ENCODE measurements at regions of chr15 and their contacts with region 1.

Region 1: GRCh38 chr15:67085818-67086636 is 20.6 kb downstream of the SMAD3 start:
- DNase-seq: peak; percentile 97
- ATAC-seq: peak; percentile 66
- H3K4me3 ChIP-seq: peak overlapping the region; percentile 54
- H3K27ac ChIP-seq: peak overlapping the region; percentile 86
- H3K4me1 ChIP-seq: peaks cover 84% of the 10 kb centered on the region
- H3K27me3 ChIP-seq: no peaks in the 10 kb centered on the region
- CTCF ChIP-seq: no peak
- EP300 ChIP-seq: peak; percentile 95 to 96
- POLR2A ChIP-seq: no peak
- RAD21 ChIP-seq: peak; percentile 26; the same call in 1 of the 2 replicates

Region 2: DNA sequence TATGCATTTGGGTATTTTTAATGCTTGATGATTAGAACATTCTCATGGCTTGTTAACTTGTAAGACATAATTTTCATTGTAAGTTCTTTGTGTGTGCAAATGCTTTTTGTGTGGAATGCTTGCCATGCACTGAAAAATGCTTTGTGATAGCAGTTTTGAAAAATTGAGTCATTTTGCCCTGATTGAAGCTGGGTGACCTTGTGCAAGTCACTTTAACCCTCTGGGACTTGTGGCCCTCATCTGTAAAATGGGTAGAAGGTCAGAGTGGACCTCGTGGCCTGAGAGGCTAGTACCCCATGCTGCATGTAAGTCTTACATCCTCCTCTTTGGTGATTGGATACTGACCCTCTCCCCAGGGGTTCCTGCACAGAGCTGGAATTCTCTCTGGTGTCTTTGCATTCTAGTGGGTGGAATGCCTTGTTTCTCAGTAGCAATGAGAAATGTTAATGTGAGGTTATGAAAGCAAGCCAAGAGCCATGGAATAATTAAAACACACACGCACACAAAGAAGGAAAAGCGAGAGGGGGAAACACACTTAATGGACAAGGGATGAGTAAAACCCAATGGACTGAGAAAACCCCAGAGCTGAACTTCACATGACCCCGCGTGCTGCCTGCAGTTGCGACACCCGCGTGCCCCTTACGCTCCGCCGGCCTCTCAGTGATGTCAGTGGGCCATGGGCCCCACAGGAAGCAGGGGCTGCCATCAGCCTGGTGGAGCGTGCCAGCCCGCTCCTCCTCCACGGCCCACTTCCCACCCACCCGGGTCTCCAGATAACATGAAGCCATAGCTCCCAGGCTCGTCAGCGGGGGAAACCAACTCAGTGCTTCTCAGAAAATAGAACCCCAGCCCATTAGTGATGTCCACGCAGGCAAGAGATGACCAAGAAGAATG is 23.4 kb after region 1 on chr15:
- CTCF ChIA-PET with region 1: interaction called, 6 read pairs
- POLR2A ChIA-PET with region 1: interaction called, 79 read pairs
- RAD21 ChIA-PET with region 1: interaction called, 15 read pairs
- SMC1A ChIA-PET with region 1: interaction called, 247 read pairs
- in situ Hi-C with region 1: no loop called
- intact Hi-C with region 1: no loop called
- DNase-seq: no peak
- ATAC-seq: peak; percentile 88
- H3K4me3 ChIP-seq: peak overlapping the region; percentile 23; the same call in 1 of the 2 replicates
- H3K27ac ChIP-seq: peak overlapping the region; percentile 92
- H3K4me1 ChIP-seq: peaks cover 63% of the 10 kb centered on the region
- H3K27me3 ChIP-seq: no peaks in the 10 kb centered on the region
- CTCF ChIP-seq: no peak
- EP300 ChIP-seq: peak; percentile 91 to 93; a peak in 3 of 4 replicates
- POLR2A ChIP-seq: peak; percentile 52
- RAD21 ChIP-seq: peak; percentile 4; the same call in 1 of the 2 replicates

Region 3: DNA sequence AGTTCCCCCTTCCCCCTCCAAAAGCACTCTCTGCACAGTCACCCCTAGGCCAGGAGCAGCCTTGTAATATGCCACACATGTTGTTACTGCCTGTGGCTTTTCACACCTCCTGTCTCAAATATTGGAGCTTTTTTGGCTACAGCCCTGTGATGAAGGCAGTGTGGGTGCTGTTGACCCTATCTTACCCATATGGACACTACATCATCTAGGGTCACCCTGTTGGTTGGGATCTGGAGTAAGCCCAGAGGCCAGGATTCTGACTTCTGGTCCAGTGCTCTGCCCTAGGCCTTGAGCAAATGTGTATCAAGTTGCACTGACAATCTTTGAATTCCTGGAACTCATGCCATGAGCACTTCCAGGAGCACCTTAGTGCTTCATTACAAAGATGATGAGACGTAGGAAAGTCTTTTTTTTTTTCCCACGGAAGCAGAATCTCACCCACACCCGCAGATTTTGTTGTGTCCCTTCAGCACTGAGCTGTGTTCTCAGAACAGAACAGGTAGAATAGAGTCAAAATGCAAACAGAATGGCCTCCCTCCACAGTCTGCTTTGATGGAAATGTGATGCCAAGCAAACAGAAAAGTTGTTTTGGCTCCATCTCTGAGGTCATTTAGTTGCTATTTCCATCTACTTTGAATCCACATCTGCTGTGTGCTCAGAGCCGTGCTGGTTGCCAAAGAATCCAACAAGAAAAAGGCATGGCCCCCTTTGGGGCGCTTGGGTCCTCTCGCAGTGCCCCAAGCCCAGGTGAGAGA is 29.0 kb after region 1 on chr15:
- CTCF ChIA-PET with region 1: interaction called, 6 read pairs
- POLR2A ChIA-PET with region 1: interaction called, 4 read pairs
- RAD21 ChIA-PET with region 1: interaction called, 18 read pairs
- SMC1A ChIA-PET with region 1: interaction called, 49 read pairs
- in situ Hi-C with region 1: no loop called
- intact Hi-C with region 1: loop called (anchors 5 kb)
- DNase-seq: no peak
- ATAC-seq: no peak
- H3K4me3 ChIP-seq: no peak overlapping the region
- H3K27ac ChIP-seq: 0 out of 2 replicates have a peak overlapping the region, but pooled peaks have one; percentile 81
- H3K4me1 ChIP-seq: peaks cover 46% of the 10 kb centered on the region
- H3K27me3 ChIP-seq: no peaks in the 10 kb centered on the region
- CTCF ChIP-seq: no peak
- EP300 ChIP-seq: no peak
- POLR2A ChIP-seq: no peak
- RAD21 ChIP-seq: no peak

Region 4: DNA sequence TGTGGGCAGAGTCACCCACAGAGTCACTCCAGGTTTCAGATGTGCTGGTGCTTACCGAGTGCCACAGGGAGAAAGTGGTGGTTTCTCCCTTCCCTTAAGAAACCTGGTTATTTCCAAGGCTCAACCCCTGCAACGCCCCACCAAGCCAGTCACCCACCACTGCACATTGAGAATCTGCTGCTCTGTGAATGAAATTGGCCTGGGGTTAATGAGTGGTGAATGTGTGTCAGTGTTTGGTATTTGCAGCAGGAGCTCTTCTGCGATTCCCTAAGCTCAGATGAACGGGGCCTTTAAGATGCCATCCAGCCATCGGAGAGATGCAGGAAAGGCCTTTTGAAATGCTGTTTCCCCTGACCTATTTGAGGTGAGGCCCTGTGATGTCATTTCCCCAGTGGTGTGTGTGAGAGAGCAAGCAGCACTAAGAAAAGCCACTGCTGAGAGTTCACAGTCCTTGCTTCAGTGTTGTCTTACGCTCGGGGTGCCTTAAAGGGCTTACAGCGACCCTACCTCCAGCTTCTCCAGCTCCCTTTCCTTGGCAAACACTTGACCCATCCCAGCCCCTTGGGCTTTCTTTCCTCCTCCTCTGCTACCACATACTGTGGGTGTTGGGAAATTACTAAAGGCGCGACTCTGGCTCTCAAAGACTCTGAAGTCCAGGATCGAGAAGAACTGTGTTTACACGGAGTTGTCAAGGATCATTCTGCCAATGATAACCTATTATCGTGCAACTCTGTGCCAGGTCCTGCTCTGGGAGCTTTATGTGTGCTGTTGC is 48.2 kb after region 1 on chr15:
- CTCF ChIA-PET with region 1: no interaction called
- POLR2A ChIA-PET with region 1: interaction called, 7 read pairs
- RAD21 ChIA-PET with region 1: interaction called, 21 read pairs
- SMC1A ChIA-PET with region 1: interaction called, 27 read pairs
- in situ Hi-C with region 1: no loop called
- intact Hi-C with region 1: loop called (anchors 1 kb)
- DNase-seq: no peak
- ATAC-seq: peak; percentile 89
- H3K4me3 ChIP-seq: peak overlapping the region; percentile 51
- H3K27ac ChIP-seq: peak overlapping the region; percentile 89
- H3K4me1 ChIP-seq: peaks cover 67% of the 10 kb centered on the region
- H3K27me3 ChIP-seq: no peaks in the 10 kb centered on the region
- CTCF ChIP-seq: no peak
- EP300 ChIP-seq: no peak
- POLR2A ChIP-seq: peak; percentile 71
- RAD21 ChIP-seq: no peak

Region 5: DNA sequence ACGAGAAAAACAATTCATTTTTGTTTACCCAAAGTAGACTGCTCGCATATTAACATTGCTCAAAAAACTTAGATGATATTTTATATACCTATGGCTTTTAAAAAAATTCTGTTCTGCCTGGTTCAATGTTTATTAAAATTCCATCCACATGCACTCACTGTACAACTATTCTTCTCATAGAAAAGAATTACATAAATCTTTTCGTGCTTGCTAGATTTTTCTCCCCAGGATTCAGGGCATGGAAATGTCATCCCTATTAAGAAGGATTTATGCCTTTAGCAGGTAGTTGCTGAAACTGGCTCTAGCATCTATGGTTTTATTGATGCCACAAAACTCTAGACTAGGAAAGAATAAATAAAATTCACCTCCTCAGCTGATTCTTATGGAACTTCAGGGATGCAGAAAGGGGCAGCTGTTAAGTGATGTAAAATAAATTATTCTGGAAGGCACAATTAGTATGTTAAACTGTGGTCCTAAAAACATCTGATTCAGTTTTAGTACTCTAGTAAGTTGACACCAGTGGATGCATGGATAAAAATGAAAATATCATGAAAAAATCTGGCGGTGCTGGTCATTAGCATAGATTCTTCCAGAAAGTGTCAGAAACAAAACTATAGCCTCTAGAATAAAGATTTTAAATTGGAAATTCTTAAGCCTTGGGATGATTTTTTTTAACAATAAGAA is 126.8 kb after region 1 on chr15:
- CTCF ChIA-PET with region 1: no interaction called
- POLR2A ChIA-PET with region 1: no interaction called
- RAD21 ChIA-PET with region 1: no interaction called
- SMC1A ChIA-PET with region 1: no interaction called
- in situ Hi-C with region 1: no loop called
- intact Hi-C with region 1: no loop called
- DNase-seq: no peak
- ATAC-seq: no peak
- H3K4me3 ChIP-seq: no peak overlapping the region
- H3K27ac ChIP-seq: no peak overlapping the region
- H3K4me1 ChIP-seq: no peaks in the 10 kb centered on the region
- H3K27me3 ChIP-seq: no peaks in the 10 kb centered on the region
- CTCF ChIP-seq: no peak
- EP300 ChIP-seq: no peak
- POLR2A ChIP-seq: no peak
- RAD21 ChIP-seq: no peak